Left lung (tissue), 14 donors: ENCODE measurements at regions of chr7 and their contacts with region 1.

Region 1: DNA sequence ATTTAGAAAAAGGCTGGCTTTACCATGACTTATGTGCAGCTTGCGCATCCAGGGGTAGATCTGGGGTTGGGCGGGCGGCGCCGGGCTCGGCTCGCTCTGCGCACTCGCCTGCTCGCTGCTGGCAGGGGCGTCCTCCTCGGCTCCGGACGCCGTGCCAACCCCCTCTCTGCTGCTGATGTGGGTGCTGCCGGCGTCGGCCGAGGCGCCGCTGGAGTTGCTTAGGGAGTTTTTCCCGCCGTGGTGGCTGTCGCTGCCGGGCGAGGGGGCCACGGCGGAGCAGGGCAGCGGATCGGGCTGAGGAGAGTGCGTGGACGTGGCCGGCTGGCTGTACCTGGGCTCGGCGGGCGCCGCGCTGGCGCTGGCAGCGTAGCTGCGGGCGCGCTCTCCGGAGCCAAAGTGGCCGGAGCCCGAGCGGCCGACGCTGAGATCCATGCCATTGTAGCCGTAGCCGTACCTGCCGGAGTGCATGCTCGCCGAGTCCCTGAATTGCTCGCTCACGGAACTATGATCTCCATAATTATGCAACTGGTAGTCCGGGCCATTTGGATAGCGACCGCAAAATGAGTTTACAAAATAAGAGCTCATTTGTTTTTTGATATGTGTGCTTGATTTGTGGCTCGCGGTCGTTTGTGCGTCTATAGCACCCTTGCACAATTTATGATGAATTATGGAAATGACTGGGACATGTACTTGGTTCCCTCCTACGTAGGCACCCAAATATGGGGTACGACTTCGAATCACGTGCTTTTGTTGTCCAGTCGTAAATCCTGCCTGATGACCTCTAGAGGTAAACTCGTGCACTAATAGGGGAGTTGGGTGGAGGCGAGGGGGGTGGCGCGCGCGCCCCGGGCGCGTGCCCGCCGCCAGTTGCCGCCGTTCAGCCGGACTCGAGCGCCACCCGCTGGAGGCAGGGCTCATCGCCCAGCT is at the start of gene HOXA5:
- DNase-seq: peak in 3 of 4 donors; percentile 81 to 97 (median 94)
- ATAC-seq: peak; percentile 77
- H3K4me3 ChIP-seq: peak within 1 kb of the TSS; percentile 52 to 56
- H3K27ac ChIP-seq: peak within 1 kb of the TSS; percentile 86 to 92
- H3K4me1 ChIP-seq: peaks cover 0 to 15% of the 10 kb centered on the region in 2 donors
- H3K27me3 ChIP-seq: peaks cover 35 to 100% of the 10 kb centered on the region in 2 donors
- CTCF ChIP-seq: peak; percentile 69 to 71
- polyA plus RNA-seq, gene HOXA5: 81.7 to 94.7 (median 89.1) TPM

Region 2: DNA sequence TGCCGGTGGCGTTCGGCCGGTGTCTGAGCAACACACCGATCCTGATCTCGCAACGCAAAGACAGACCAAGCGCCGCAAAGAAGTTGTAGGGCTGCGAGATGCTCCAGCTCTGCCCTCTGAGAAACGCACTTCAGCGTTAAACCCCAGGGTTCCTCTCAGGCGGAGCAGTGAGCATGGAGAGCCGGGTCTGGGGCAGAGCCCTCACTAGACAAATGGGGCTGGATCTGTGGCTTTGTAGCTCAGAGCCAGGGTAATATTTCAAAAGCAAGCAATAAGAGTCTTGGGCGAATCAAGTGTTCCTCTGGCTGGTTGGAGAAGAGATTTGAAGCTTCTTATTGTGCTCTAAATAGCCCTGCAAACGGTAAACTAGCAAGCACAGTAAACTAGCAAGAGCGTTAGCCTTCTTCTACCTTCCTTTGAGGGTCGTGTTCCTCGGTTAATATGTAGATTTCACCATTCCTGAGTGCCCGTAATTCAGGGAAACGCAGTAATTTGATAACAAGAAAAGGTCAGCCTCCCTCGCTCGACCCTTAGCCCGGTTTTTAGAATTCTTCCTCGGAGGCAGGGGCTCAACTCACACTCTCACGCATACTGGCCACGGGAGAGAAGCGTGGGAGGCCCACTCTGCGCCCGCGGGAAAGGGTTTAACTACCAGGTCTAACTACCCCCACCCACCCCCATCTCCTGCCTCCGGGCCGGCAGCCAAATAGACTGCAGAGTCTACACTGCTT is 285.6 kb before region 1 on chr7:
- intact Hi-C with region 1: loop called in 1 of 2 experiments (anchors 2 kb)
- DNase-seq: peak in 2 of 4 donors; percentile 37 to 74
- ATAC-seq: peak; percentile 75
- H3K4me3 ChIP-seq: peak overlapping the region; percentile 15
- H3K27ac ChIP-seq: peak overlapping the region; percentile 71 to 88
- H3K4me1 ChIP-seq: peaks cover 19 to 71% of the 10 kb centered on the region in 2 donors
- H3K27me3 ChIP-seq: peaks cover 0 to 16% of the 10 kb centered on the region in 2 donors
- CTCF ChIP-seq: no peak

Region 3: DNA sequence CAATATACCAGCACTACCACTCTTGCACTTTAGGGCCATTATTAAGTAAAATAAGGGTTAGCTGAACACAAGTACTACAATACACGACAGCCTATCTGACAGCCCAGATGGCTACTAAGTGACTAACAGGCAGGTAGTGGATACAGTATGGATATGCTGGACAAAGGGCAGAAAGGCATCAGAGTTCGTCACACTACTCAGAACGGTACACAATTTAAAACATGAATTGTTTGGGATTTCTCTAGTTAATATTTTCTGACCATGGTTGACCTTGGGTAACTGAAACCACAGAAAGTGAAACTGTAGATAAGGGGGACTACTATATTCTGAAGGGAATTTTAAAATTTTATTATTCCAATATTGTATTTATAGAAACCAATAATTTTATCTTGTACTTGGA is 177.6 kb before region 1 on chr7:
- intact Hi-C with region 1: no loop called
- DNase-seq: no peak
- ATAC-seq: no peak
- H3K4me3 ChIP-seq: no peak overlapping the region
- H3K27ac ChIP-seq: no peak overlapping the region
- H3K4me1 ChIP-seq: peaks cover 0 to 5% of the 10 kb centered on the region in 2 donors
- H3K27me3 ChIP-seq: no peaks in the 10 kb centered on the region
- CTCF ChIP-seq: no peak